Sigmoid colon (tissue), 7 donors: ENCODE measurements at regions of chr1 and their contacts with region 1.

Region 1: DNA sequence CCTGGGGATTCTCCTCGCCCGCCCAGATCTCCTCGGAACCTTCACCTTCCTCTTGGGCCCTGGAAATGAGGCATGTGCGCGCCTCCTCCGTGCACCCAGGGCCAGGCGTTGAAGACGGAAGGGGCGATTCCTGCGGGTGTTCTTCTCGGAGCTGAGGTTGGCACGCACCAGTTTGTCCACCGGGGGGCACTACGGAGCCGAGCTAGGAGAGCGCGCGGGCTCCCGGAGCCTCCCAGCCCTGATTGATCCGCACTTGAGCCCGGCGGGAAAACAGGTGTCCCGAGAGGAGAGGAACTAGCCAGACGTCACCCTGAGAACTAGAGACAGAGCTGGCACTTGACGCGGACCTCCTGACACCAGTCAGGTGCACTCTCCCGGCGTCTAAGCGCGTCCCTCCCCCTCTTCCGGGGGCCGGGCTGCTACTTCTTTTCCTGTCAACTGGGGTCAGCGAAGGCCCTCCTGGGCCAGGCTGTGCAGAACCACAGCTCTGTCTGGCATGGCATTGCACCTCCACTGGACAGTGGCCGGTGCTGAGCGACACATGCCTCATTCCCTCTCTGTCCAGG is 18.3 kb upstream of the SERINC2 start:
- DNase-seq: peak; percentile 87
- H3K4me3 ChIP-seq: peak overlapping the region in 3 of 4 donors; percentile 28 to 43 (median 43)
- H3K27ac ChIP-seq: no peak overlapping the region
- H3K4me1 ChIP-seq: peaks cover 0 to 9% (median 7%) of the 10 kb centered on the region in 4 donors
- H3K27me3 ChIP-seq: no peaks in the 10 kb centered on the region
- CTCF ChIP-seq: peak; percentile 67 to 87 (median 80)
- EP300 ChIP-seq: no peak
- POLR2A ChIP-seq: no peak

Region 2: DNA sequence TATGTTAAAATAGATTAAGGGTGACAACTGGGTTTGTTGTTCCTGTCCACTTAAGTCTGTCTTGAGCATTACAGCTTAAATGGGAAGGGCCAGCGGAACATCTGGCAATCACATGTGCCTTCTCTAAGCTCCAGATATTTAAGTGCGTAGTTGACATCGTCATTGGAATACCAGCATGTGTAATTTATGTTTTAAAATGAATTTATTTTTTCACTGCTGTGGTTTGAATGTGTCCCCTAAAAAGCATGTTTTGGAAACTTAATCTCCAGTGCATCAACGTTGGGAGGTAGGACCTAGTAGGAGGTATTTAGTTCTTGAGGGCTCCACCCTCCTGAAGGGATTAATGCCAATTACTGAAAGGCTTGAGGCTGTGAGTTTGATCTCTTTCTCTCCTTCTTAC is 84.5 kb before region 1 on chr1:
- intact Hi-C with region 1: no loop called
- DNase-seq: no peak
- H3K4me3 ChIP-seq: no peak overlapping the region
- H3K27ac ChIP-seq: no peak overlapping the region
- H3K4me1 ChIP-seq: no peaks in the 10 kb centered on the region
- H3K27me3 ChIP-seq: no peaks in the 10 kb centered on the region
- CTCF ChIP-seq: no peak
- EP300 ChIP-seq: no peak
- POLR2A ChIP-seq: no peak

Region 3: GRCh38 chr1:31434171-31434871 is 39.6 kb after region 1 on chr1:
- intact Hi-C with region 1: no loop called
- DNase-seq: no peak
- H3K4me3 ChIP-seq: no peak overlapping the region
- H3K27ac ChIP-seq: no peak overlapping the region
- H3K4me1 ChIP-seq: no peaks in the 10 kb centered on the region
- H3K27me3 ChIP-seq: no peaks in the 10 kb centered on the region
- CTCF ChIP-seq: no peak
- EP300 ChIP-seq: no peak
- POLR2A ChIP-seq: no peak

Region 4: GRCh38 chr1:31476891-31477828 is 82.4 kb after region 1 on chr1:
- intact Hi-C with region 1: no loop called
- DNase-seq: no peak
- H3K4me3 ChIP-seq: no peak overlapping the region
- H3K27ac ChIP-seq: no peak overlapping the region
- H3K4me1 ChIP-seq: no peaks in the 10 kb centered on the region
- H3K27me3 ChIP-seq: no peaks in the 10 kb centered on the region
- CTCF ChIP-seq: no peak
- EP300 ChIP-seq: no peak
- POLR2A ChIP-seq: no peak

Region 5: DNA sequence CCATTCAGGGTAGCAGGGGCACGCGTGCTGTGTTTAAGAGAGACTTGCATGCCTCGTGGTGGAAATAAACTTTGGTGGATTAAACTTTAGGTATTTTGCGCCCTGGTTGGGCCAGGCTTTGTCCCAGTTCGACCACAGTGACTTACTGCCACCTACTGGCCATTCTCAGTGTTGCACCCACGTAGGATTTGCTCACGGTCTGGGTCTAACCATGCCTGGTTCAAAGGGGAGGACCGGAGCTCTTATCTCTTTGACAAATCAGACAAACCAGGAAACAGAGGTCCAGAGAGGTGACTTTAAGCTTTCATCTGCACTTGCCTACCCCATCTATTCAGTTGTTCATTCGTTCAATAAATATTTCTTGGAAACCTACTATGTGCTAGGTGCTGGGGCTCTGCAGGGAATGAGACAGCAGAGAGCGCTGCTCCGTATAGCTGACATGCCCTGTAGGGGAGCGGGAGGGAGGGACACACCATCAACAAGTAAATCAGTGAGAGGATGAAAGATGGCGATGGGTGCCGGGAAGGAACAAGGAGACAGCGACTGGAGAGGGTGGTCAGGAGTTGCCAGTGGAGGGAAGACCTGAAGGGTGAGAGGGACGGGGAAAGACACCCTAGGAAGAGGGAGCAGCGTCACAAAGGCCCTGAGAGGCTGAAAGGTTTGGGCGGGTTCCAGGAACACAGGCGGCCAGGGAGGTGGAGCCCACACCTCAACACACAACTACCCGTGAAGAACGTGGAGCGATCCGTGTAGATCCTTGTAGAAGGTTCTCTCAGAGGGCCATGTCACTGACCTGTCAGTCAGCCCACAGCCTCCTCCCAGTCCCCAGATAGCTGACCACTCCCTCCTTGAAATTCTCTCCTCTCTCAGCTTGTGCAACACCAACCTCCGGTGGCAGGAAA is 154.4 kb after region 1 on chr1:
- intact Hi-C with region 1: loop called (anchors 1 kb)
- DNase-seq: peak; percentile 86
- H3K4me3 ChIP-seq: peak overlapping the region in 2 of 4 donors; percentile 4 to 10
- H3K27ac ChIP-seq: no peak overlapping the region
- H3K4me1 ChIP-seq: peaks cover 0 to 16% (median 16%) of the 10 kb centered on the region in 4 donors
- H3K27me3 ChIP-seq: peaks cover 0 to 3% (median 0%) of the 10 kb centered on the region in 3 donors
- CTCF ChIP-seq: peak; percentile 53 to 94 (median 90)
- EP300 ChIP-seq: no peak
- POLR2A ChIP-seq: no peak